Astrocyte of the cerebellum (primary cell): ENCODE measurements at regions of chr15 and their contacts with region 1.

Region 1: GRCh38 chr15:70149667-70150404 is 52.1 kb upstream of the TLE3 start:
- DNase-seq: no peak
- H3K4me3 ChIP-seq: no peak overlapping the region
- CTCF ChIP-seq: no peak

Region 2: GRCh38 chr15:70077188-70078147 is 72.4 kb before region 1 on chr15:
- in situ Hi-C with region 1: no loop called
- DNase-seq: no peak
- H3K4me3 ChIP-seq: no peak overlapping the region
- CTCF ChIP-seq: no peak

Region 3: GRCh38 chr15:70109978-70110377 is 39.9 kb before region 1 on chr15:
- in situ Hi-C with region 1: loop called (anchors 5 kb)
- DNase-seq: no peak
- H3K4me3 ChIP-seq: no peak overlapping the region
- CTCF ChIP-seq: no peak